Lower lobe of right lung (tissue), 2 donors: ENCODE measurements at regions of chr16 and their contacts with region 1.

Region 1: DNA sequence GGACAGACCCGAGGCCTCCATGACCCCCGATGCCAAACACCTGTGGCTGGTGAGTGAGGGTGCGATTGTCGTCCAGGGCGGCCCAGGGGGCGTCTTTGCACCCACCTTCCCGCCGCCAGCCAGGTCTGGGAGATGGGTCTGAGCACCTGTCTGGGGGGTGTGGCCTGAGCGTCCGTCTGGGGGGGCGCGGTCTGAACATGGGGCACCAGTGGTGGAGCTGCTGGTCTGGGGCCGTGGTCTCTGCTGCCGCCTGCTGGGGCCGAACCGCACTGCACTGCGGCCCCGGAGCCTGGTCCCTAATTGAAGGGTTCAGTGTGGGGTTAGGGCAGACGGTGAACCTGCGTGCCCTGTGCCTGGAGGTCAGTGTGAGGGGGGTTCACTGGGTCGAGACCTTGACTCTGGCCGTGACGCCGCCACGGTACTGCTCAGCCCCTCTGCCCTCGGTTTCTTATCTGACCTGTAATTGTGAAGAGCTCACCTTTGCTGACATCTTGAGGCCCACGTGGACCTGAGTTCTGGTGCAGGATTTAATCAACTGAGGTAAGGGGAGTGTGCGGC is 12.6 kb upstream of the TCF25 start:
- DNase-seq: peak; percentile 80
- ATAC-seq: peak; percentile 89 to 90
- H3K4me3 ChIP-seq: no peak overlapping the region
- H3K27ac ChIP-seq: no peak overlapping the region
- H3K4me1 ChIP-seq: peaks cover 25% of the 10 kb centered on the region
- H3K27me3 ChIP-seq: no peaks in the 10 kb centered on the region
- CTCF ChIP-seq: peak; percentile 97

Region 2: GRCh38 chr16:89678258-89678657 is 182.6 kb before region 1 on chr16:
- intact Hi-C with region 1: no loop called
- DNase-seq: no peak
- ATAC-seq: no peak
- H3K4me3 ChIP-seq: no peak overlapping the region
- H3K27ac ChIP-seq: no peak overlapping the region
- H3K4me1 ChIP-seq: no peaks in the 10 kb centered on the region
- H3K27me3 ChIP-seq: no peaks in the 10 kb centered on the region
- CTCF ChIP-seq: no peak

Region 3: DNA sequence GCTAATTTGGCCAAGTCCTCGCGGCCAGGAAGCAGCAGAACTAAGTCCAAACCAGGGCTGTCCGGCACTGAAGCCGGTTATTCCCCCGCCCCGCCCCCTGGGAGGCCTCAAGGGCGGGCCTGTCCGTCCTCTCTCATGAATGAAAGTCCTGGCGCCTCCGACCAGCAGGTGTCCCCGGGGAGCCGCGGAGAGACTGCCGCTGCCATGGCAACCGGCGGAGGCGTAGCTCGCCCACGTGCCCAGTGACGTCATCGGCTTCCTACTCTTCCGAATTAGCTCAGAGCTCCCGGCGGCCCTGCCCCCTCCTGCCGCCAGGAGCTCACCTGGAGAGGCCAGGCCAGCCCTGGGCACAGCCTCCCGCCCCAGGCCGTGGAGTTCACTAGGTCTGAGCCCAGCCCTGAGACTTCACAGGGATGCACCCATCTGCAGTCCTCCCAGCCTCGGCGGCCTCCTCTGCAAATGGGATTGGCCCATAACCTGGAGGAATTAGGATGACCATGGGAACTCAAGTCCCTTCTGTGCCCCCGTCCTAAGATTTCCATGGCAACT is 160.7 kb before region 1 on chr16:
- intact Hi-C with region 1: loop called (anchors 10 kb)
- DNase-seq: peak; percentile 100
- ATAC-seq: peak; percentile 79 to 85
- H3K4me3 ChIP-seq: peak overlapping the region; percentile 73
- H3K27ac ChIP-seq: peak overlapping the region; percentile 86
- H3K4me1 ChIP-seq: peaks cover 17% of the 10 kb centered on the region
- H3K27me3 ChIP-seq: no peaks in the 10 kb centered on the region
- CTCF ChIP-seq: peak; percentile 85